SK-N-SH (cell line): ENCODE measurements at regions of chr5 and their contacts with region 1.

Region 1: GRCh38 chr5:142324871-142325724 is at the start of gene SPRY4:
- DNase-seq: peak; percentile 95
- H3K4me3 ChIP-seq: peak within 1 kb of the TSS; percentile 93 to 95
- H3K27ac ChIP-seq: peak within 1 kb of the TSS; percentile 98
- H3K4me1 ChIP-seq: peaks cover 31 to 50% of the 10 kb centered on the region in 2 experiments
- H3K27me3 ChIP-seq: no peaks in the 10 kb centered on the region
- CTCF ChIP-seq: 0 out of 2 replicates have a peak, but pooled peaks have one; percentile 5
- EP300 ChIP-seq: peak; percentile 36 to 51; a peak in 2 of 4 replicates
- RAD21 ChIP-seq: peak; percentile 39
- polyA plus RNA-seq, gene SPRY4: 12.2 and 18.0 TPM in 2 replicates

Region 2: GRCh38 chr5:141757402-141757801 is 567.7 kb before region 1 on chr5:
- CTCF ChIA-PET with region 1: no interaction called
- POLR2A ChIA-PET with region 1: no interaction called
- DNase-seq: peak; percentile 80
- H3K4me3 ChIP-seq: no peak overlapping the region; a peak in 1 of 4 replicates
- H3K27ac ChIP-seq: no peak overlapping the region
- H3K4me1 ChIP-seq: peaks cover 0 to 27% of the 10 kb centered on the region in 2 experiments; a peak in 1 of 4 replicates
- H3K27me3 ChIP-seq: peaks cover under 1% of the 10 kb centered on the region
- CTCF ChIP-seq: peak; percentile 50
- EP300 ChIP-seq: no peak
- RAD21 ChIP-seq: peak; percentile 70

Region 3: DNA sequence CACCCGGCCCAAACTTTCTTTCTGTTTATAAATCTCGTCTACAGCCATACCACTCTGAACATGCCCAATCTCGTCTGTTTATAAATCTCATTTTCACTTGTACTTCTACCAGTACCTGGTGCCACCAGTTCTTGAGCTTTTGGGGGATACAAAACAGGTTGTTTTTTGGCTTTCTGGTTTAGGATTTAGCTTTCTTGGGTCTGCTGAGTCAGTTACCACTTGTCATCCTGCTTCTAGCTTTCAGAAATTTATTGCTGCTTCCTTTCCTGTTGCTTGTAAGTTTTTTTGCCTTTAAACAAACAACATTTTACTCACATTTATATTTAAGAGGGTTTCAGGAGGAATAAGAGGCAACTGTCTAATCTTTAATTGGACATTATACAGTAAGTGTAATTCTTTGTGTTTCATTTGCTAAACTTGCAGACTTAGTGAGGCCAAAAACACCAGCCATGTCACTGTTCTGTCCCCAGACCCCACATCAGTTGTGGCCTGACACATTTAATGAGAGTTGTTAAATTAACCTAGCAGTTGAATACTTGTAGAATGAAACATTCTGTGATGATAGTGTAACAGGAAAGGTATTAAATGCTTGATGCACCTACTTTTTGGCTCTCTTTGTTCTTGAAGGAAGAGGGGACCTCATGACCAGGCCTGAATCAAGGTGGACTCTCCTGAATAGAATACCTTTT is 204.7 kb before region 1 on chr5:
- CTCF ChIA-PET with region 1: no interaction called
- POLR2A ChIA-PET with region 1: no interaction called
- DNase-seq: no peak
- H3K4me3 ChIP-seq: no peak overlapping the region
- H3K27ac ChIP-seq: no peak overlapping the region
- H3K4me1 ChIP-seq: peaks cover 0 to 9% of the 10 kb centered on the region in 2 experiments; a peak in 1 of 4 replicates
- H3K27me3 ChIP-seq: no peaks in the 10 kb centered on the region
- CTCF ChIP-seq: no peak
- EP300 ChIP-seq: no peak
- RAD21 ChIP-seq: no peak

Region 4: DNA sequence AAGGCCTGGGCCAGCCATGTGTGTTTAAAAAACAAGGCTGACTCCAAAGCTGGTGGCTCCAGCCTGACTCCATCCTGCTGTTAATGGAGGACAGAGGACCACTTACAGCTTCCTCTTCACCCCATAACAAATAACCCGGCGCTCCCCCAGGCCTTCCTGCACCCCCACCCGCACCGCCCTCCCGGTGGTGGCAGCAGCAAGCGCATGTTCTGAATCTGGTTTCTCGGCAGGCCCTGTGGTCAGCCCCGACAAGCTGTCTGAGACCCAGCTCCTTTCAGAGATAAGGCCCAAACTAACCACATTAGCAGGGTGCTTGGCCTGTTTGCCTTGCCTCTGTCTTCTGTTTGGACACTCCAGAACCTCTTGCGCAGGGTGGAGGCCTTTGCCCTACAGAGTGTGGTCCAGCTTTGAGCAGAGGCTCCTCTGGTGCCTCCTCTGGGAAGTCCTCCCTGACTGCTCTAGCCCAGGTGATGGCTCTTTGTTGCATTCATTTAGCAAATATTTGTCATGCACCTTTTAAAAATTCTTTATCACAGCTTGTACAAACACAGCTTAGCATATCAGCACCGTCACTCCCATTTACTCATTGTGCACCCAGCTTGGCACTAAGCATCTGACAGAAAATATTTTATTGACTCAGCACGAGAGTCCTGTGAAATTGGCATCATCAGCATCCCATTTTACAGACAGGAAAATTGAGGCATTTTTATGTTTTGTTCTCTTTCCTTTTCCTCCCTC is 138.1 kb before region 1 on chr5:
- CTCF ChIA-PET with region 1: interaction called, 6 read pairs
- POLR2A ChIA-PET with region 1: interaction called, 15 read pairs
- DNase-seq: peak; percentile 67
- H3K4me3 ChIP-seq: no peak overlapping the region
- H3K27ac ChIP-seq: peak overlapping the region in 1 of 2 experiments; percentile 98; a peak in 2 of 4 replicates
- H3K4me1 ChIP-seq: peaks cover 0 to 49% of the 10 kb centered on the region in 2 experiments; a peak in 2 of 4 replicates
- H3K27me3 ChIP-seq: no peaks in the 10 kb centered on the region
- CTCF ChIP-seq: no peak
- EP300 ChIP-seq: peak in 1 of 2 experiments; percentile 12; a peak in 2 of 4 replicates
- RAD21 ChIP-seq: no peak

Region 5: DNA sequence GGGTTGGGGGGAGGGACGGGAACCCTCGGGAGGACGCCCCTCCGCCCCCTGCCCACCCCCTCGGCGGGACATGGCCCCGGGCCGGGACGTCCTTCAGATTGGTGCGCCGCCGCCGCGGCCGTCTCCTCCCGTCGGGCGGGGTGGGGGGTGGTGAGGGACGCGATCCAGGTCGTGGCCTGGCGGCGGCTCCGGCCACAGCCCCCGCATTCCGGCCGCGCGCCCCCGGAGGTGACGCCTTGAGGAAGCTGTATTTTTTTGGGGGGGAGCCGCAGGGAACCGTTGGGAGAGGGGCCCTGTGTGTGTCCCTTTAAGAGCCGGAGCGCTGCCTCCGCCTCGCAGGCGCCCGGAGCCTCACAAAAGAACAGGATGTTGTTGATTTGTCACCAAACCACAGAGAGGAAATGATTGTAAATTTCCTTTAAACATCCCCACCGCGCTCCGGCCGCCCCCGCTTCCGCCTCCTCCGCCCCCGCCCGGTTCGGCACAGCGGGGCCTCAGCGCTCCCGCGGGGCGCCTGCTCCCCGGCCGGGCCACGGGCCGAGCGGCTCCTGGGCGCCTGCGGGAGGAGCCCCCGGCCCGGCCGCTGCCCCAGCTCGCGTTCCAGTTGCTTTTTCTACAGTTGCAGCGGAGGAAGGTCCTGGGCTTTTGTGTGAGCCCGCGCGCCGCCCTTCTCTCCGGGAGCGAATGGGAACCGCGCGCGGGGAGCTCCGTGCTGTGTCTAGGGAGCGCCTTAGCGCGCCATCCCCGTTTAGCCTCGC is 31.8 kb after region 1 on chr5:
- CTCF ChIA-PET with region 1: interaction called, 5 read pairs
- POLR2A ChIA-PET with region 1: interaction called, 23 read pairs
- DNase-seq: peak; percentile 92
- H3K4me3 ChIP-seq: peak overlapping the region; percentile 58 to 59
- H3K27ac ChIP-seq: peak overlapping the region; percentile 98 to 99
- H3K4me1 ChIP-seq: peaks cover 29 to 34% of the 10 kb centered on the region in 2 experiments
- H3K27me3 ChIP-seq: no peaks in the 10 kb centered on the region
- CTCF ChIP-seq: no peak
- EP300 ChIP-seq: peak; percentile 46 to 75; a peak in 3 of 4 replicates
- RAD21 ChIP-seq: no peak

Region 6: GRCh38 chr5:142486581-142486980 is 161.5 kb after region 1 on chr5:
- CTCF ChIA-PET with region 1: no interaction called
- POLR2A ChIA-PET with region 1: no interaction called
- DNase-seq: no peak
- H3K4me3 ChIP-seq: no peak overlapping the region
- H3K27ac ChIP-seq: no peak overlapping the region; a peak in 1 of 4 replicates
- H3K4me1 ChIP-seq: peaks cover 9 to 19% of the 10 kb centered on the region in 2 experiments; a peak in 3 of 4 replicates
- H3K27me3 ChIP-seq: no peaks in the 10 kb centered on the region
- CTCF ChIP-seq: no peak
- EP300 ChIP-seq: no peak
- RAD21 ChIP-seq: no peak